Activated naive CD4-positive, alpha-beta T cell treated with anti-CD3 and anti-CD28 coated beads for 36 hours (primary cell): ENCODE measurements at regions of chr5 and their contacts with region 1.

Region 1: GRCh38 chr5:156934450-156935211 is 28.4 kb downstream of the TIMD4 start:
- DNase-seq: peak; percentile 88
- H3K4me3 Mint-ChIP-seq: peak overlapping the region; percentile 22
- H3K27ac Mint-ChIP-seq: peak overlapping the region; percentile 92
- H3K4me1 Mint-ChIP-seq: peaks cover 47% of the 10 kb centered on the region
- H3K27me3 Mint-ChIP-seq: no peaks in the 10 kb centered on the region

Region 2: DNA sequence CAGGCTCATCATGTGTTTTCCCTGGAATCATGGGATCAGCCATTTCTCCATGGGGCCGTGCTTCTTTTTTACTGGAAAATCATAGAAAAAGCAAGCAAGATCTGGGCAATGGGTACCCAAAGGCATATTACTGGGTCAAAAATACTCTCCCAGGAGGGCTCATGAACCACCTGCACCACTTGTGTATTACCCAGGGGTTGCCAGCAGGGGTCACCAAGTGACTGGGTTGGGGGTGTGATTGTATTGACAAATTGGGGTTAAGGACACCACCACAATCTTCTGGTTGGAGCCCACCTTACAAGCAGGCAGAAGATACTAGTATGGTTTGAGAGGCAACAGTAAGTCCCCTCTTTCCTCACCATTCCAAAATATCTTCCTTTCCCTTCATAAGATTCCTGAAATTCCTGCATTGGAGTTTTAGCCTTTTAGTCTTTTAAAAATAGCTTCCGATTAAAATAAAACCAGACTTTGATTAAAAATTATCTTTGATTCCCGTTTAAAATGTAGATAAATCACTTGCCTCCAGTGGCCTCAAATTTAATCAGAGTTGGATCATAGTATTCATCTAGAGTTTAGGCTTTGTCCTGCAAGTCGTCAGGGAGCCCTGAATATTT is 1317.7 kb before region 1 on chr5:
- CTCF ChIA-PET with region 1: no interaction called
- intact Hi-C with region 1: loop called (anchors 2 kb)
- DNase-seq: peak; percentile 69
- H3K4me3 Mint-ChIP-seq: no peak overlapping the region
- H3K27ac Mint-ChIP-seq: no peak overlapping the region
- H3K4me1 Mint-ChIP-seq: no peaks in the 10 kb centered on the region
- H3K27me3 Mint-ChIP-seq: peaks cover 32% of the 10 kb centered on the region

Region 3: GRCh38 chr5:156675395-156675794 is 259.2 kb before region 1 on chr5:
- CTCF ChIA-PET with region 1: interaction called, 3 read pairs
- intact Hi-C with region 1: loop called (anchors 5 kb)
- DNase-seq: no peak
- H3K4me3 Mint-ChIP-seq: no peak overlapping the region
- H3K27ac Mint-ChIP-seq: no peak overlapping the region
- H3K4me1 Mint-ChIP-seq: no peaks in the 10 kb centered on the region
- H3K27me3 Mint-ChIP-seq: no peaks in the 10 kb centered on the region

Region 4: DNA sequence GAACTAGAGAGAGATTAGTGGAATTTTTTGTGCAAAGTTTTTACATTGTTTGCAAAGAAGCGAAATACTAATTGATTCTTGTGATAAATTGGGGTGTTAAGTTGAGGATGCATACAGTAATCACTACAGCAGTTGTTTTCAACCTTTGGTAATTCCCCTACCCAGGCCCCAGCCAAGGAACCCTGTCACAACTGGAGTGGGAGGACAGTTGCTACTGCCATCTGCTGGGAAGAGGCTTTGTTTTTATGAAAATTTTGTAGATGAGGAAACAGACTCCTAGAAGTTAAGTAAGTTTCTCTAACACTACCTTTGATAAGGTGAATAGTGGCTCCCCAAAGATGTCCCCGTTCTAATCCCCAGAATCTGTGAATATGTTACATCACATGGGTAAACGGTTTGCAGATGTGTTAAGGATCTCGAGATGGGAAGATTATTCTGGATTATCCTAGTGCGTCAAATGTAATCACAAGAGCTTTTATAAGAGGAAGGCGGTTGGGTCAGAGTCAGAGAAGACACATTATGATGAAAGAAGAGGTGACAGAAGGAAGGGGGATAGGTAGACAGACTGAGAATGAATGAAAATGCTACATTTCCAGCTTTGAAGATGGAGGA is 118.5 kb before region 1 on chr5:
- CTCF ChIA-PET with region 1: no interaction called
- intact Hi-C with region 1: loop called (anchors 1 kb)
- DNase-seq: peak; percentile 77
- H3K4me3 Mint-ChIP-seq: no peak overlapping the region
- H3K27ac Mint-ChIP-seq: peak overlapping the region; percentile 28
- H3K4me1 Mint-ChIP-seq: peaks cover 7% of the 10 kb centered on the region
- H3K27me3 Mint-ChIP-seq: no peaks in the 10 kb centered on the region

Region 5: DNA sequence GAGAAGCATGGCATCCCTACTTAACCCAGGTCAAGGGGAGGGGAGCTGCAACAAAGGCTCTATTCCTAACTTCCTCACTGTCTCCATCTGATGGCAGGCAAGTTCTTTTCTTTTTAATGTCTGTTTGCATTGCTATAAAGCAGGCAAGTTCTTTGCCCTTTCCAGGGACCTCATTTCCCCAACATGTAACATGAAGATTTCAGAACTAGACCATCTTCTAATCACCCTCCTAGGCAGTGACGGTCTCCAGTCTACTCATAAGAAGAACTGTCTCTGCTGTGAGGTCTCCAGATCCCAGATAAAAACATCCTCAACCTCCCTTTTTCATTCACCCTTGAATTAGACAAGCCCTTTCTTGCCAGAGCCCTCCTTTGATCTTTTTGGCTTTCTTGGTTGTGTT is 42.4 kb before region 1 on chr5:
- CTCF ChIA-PET with region 1: interaction called, 4 read pairs
- intact Hi-C with region 1: loop called (anchors 1 kb)
- DNase-seq: no peak
- H3K4me3 Mint-ChIP-seq: no peak overlapping the region
- H3K27ac Mint-ChIP-seq: peak overlapping the region; percentile 78
- H3K4me1 Mint-ChIP-seq: peaks cover 41% of the 10 kb centered on the region
- H3K27me3 Mint-ChIP-seq: no peaks in the 10 kb centered on the region